Activated CD8-positive, alpha-beta T cell treated with anti-CD3 and anti-CD28 coated beads, Interleukin-2, amount 10 ng/mL, durations not matched to agents 7 days and 5 days (primary cell): ENCODE measurements at regions of chr16 and their contacts with region 1.

Region 1: GRCh38 chr16:67816240-67817031 is 9.7 kb downstream of the TSNAXIP1 start:
- DNase-seq: peak; percentile 93
- ATAC-seq: peak; percentile 96
- H3K4me3 Mint-ChIP-seq: no peak overlapping the region
- H3K27ac Mint-ChIP-seq: peak overlapping the region; percentile 20
- H3K4me1 Mint-ChIP-seq: peaks cover 7% of the 10 kb centered on the region
- H3K27me3 Mint-ChIP-seq: peaks cover 5% of the 10 kb centered on the region

Region 2: GRCh38 chr16:67349172-67349571 is 467.3 kb before region 1 on chr16:
- CTCF ChIA-PET with region 1: no interaction called
- POLR2A ChIA-PET with region 1: no interaction called
- DNase-seq: no peak
- ATAC-seq: peak; percentile 80
- H3K4me3 Mint-ChIP-seq: no peak overlapping the region
- H3K27ac Mint-ChIP-seq: no peak overlapping the region
- H3K4me1 Mint-ChIP-seq: no peaks in the 10 kb centered on the region
- H3K27me3 Mint-ChIP-seq: peaks cover 14% of the 10 kb centered on the region

Region 3: GRCh38 chr16:67456391-67457081 is 359.9 kb before region 1 on chr16:
- CTCF ChIA-PET with region 1: no interaction called
- POLR2A ChIA-PET with region 1: no interaction called
- DNase-seq: no peak
- ATAC-seq: no peak
- H3K4me3 Mint-ChIP-seq: no peak overlapping the region
- H3K27ac Mint-ChIP-seq: no peak overlapping the region
- H3K4me1 Mint-ChIP-seq: peaks cover 23% of the 10 kb centered on the region
- H3K27me3 Mint-ChIP-seq: no peaks in the 10 kb centered on the region

Region 4: GRCh38 chr16:67537270-67537635 is 279.2 kb before region 1 on chr16:
- CTCF ChIA-PET with region 1: no interaction called
- POLR2A ChIA-PET with region 1: no interaction called
- DNase-seq: peak; percentile 46
- ATAC-seq: peak; percentile 47
- H3K4me3 Mint-ChIP-seq: peak overlapping the region; percentile 69
- H3K27ac Mint-ChIP-seq: peak overlapping the region; percentile 25
- H3K4me1 Mint-ChIP-seq: peaks cover 10% of the 10 kb centered on the region
- H3K27me3 Mint-ChIP-seq: peaks cover 34% of the 10 kb centered on the region

Region 5: GRCh38 chr16:67672739-67673662 is 143.4 kb before region 1 on chr16:
- CTCF ChIA-PET with region 1: interaction called, 24 read pairs
- POLR2A ChIA-PET with region 1: no interaction called
- DNase-seq: peak; percentile 73
- ATAC-seq: peak; percentile 19
- H3K4me3 Mint-ChIP-seq: no peak overlapping the region
- H3K27ac Mint-ChIP-seq: no peak overlapping the region
- H3K4me1 Mint-ChIP-seq: peaks cover 3% of the 10 kb centered on the region
- H3K27me3 Mint-ChIP-seq: no peaks in the 10 kb centered on the region

Region 6: GRCh38 chr16:67833418-67834241 is 17.2 kb after region 1 on chr16:
- CTCF ChIA-PET with region 1: interaction called, 47 read pairs
- POLR2A ChIA-PET with region 1: interaction called, 5 read pairs
- DNase-seq: peak; percentile 97
- ATAC-seq: peak; percentile 98
- H3K4me3 Mint-ChIP-seq: peak overlapping the region; percentile 92
- H3K27ac Mint-ChIP-seq: peak overlapping the region; percentile 88
- H3K4me1 Mint-ChIP-seq: peaks cover 11% of the 10 kb centered on the region
- H3K27me3 Mint-ChIP-seq: no peaks in the 10 kb centered on the region

Region 7: DNA sequence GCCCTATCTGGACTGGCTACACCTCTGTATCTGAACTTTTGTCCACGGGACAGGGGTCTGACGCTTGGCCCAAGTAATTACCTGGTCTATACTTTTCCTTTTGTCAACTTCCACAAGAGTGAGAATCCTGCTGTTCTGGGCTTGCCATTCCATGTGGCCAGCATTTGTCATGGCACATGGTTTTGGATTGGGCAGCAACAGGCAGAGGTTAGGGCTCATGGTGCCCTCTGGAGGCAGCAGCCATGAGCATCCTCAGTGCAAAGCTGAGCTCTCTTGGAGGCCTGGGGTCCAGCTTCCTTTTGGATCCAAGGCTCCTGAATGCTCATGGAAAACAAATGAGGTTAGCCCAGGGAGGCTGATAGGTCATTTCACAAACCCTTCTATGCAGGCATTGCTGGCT is 48.9 kb after region 1 on chr16:
- CTCF ChIA-PET with region 1: interaction called, 37 read pairs
- POLR2A ChIA-PET with region 1: no interaction called
- DNase-seq: peak; percentile 36
- ATAC-seq: peak; percentile 67
- H3K4me3 Mint-ChIP-seq: no peak overlapping the region
- H3K27ac Mint-ChIP-seq: no peak overlapping the region
- H3K4me1 Mint-ChIP-seq: peaks cover 2% of the 10 kb centered on the region
- H3K27me3 Mint-ChIP-seq: no peaks in the 10 kb centered on the region

Region 8: DNA sequence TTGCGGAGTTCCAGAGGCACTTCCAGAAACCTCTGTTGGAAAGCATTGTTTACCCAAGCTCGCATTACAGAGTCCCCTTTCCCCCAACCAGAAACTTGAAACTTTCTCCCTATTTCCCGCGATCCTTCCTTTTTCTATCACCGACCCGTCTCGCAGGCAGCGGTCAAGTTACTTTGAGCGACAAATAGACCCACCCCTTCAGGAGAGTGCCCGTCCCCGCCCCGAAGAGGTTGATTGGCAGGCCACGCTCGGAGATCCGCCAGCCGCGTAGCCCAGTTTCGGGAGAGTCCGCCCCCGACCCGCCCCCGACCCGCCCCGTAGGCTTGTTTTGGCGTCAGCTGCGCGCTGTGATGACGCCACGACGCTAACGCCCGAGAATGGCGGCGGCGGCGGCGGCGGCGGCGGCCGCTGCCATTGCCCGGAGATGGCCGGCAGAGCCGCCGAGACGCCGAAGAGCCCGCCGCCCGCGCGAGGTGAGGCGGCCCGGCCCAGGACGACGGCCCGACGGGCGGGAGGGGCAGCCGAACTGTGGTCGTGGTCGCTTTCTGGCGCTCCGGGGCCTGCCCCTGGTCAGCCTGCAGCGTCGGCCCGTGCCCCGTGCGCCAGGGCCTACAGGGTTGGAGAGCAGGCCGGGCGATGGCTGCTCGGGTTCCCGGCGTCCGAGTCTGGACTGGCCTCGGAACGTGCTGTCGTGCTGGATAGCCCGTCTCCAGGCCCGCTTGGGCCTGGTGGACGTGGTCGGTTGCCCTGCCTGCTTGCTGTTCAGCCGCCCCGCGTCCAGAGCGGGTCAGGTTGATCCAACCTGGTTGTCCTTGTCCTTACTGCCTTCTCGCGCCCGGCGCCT is 76.7 kb after region 1 on chr16 and contains the start of gene PSKH1:
- CTCF ChIA-PET with region 1: interaction called, 21 read pairs
- POLR2A ChIA-PET with region 1: no interaction called
- DNase-seq: peak; percentile 96
- ATAC-seq: peak; percentile 99
- H3K4me3 Mint-ChIP-seq: peak within 1 kb of the TSS; percentile 97
- H3K27ac Mint-ChIP-seq: peak within 1 kb of the TSS; percentile 97
- H3K4me1 Mint-ChIP-seq: peaks cover 26% of the 10 kb centered on the region
- H3K27me3 Mint-ChIP-seq: no peaks in the 10 kb centered on the region
- total RNA-seq, gene PSKH1: 20.0 to 22.8 TPM

Region 9: GRCh38 chr16:67928561-67929364 is 112.3 kb after region 1 on chr16:
- CTCF ChIA-PET with region 1: interaction called, 25 read pairs
- POLR2A ChIA-PET with region 1: no interaction called
- DNase-seq: peak; percentile 87
- ATAC-seq: peak; percentile 86
- H3K4me3 Mint-ChIP-seq: no peak overlapping the region
- H3K27ac Mint-ChIP-seq: no peak overlapping the region
- H3K4me1 Mint-ChIP-seq: peaks cover 2% of the 10 kb centered on the region
- H3K27me3 Mint-ChIP-seq: no peaks in the 10 kb centered on the region